ENCODE measurements at regions of chr11 and their contacts with region 1.

Region 1: GRCh38 chr11:56841210-56841810 is 92.8 kb upstream of the OR9G4 start:
- DNase-seq: peak; percentile 67
- H3K4me3 Mint-ChIP-seq: no peak overlapping the region
- H3K27ac Mint-ChIP-seq: peak overlapping the region; percentile 87
- H3K4me1 Mint-ChIP-seq: peaks cover 33% of the 10 kb centered on the region
- H3K27me3 Mint-ChIP-seq: no peaks in the 10 kb centered on the region
- CTCF ChIP-seq: peak; percentile 65

Region 2: GRCh38 chr11:56885177-56885576 is 43.9 kb after region 1 on chr11:
- CTCF ChIA-PET with region 1: interaction called, 5 read pairs
- intact Hi-C with region 1: loop called (anchors 1 kb)
- DNase-seq: peak; percentile 79
- H3K4me3 Mint-ChIP-seq: peak overlapping the region; percentile 53
- H3K27ac Mint-ChIP-seq: peak overlapping the region; percentile 98
- H3K4me1 Mint-ChIP-seq: peaks cover 48% of the 10 kb centered on the region
- H3K27me3 Mint-ChIP-seq: no peaks in the 10 kb centered on the region
- CTCF ChIP-seq: no peak

Region 3: DNA sequence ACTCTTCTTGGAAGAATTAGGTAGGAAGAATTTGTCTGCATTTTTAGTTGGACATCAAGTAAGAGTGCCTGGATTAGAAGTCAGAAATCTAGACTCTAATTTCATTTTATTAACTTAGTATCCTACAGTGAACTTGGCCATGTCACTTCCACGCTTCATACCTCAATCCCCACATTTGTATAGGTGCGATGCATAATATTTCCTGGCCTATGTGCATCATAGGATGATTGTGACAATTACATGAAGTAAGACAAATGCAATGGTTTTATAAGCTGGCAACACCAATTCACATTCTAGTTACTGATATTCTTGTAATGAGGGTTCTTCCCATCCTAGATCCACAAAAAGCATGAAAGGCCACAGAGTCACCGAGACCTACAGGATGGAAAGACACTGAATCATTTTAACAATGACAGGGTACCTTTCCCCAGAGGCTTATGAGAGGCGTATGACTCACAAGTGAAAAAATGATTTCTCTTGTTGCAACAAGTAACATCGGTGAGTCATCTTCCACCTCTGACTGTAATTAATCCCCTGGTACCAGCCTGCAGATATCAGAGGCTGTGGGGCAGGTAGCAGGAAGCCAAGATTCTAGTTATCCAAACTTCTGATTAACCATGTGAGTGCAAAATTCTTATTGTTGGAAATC is 91.4 kb after region 1 on chr11:
- CTCF ChIA-PET with region 1: no interaction called
- intact Hi-C with region 1: loop called (anchors 5 kb)
- DNase-seq: peak; percentile 60
- H3K4me3 Mint-ChIP-seq: peak overlapping the region; percentile 27
- H3K27ac Mint-ChIP-seq: peak overlapping the region; percentile 96
- H3K4me1 Mint-ChIP-seq: peaks cover 73% of the 10 kb centered on the region
- H3K27me3 Mint-ChIP-seq: no peaks in the 10 kb centered on the region
- CTCF ChIP-seq: no peak

Region 4: DNA sequence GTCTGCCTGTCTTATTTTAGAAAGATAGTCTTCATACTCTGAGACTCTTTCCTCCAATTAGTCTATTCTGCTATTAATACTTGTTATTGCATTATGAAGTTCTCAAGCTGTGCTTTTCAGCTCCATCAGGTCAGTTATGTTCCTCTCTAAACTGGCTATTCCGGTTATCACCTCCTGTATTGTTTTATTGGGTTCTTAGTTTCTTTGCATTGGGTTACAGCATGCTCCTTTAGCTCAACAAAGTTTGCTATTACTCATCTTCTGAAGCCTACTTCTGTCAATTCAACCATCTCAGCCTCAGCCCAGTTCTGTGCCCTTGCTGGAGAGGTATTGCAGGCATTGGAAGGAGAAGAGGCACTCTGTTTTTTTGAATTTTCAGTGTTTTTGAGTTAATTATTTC is 126.4 kb after region 1 on chr11:
- CTCF ChIA-PET with region 1: no interaction called
- intact Hi-C with region 1: no loop called
- DNase-seq: no peak
- H3K4me3 Mint-ChIP-seq: no peak overlapping the region
- H3K27ac Mint-ChIP-seq: no peak overlapping the region
- H3K4me1 Mint-ChIP-seq: peaks cover 13% of the 10 kb centered on the region
- H3K27me3 Mint-ChIP-seq: no peaks in the 10 kb centered on the region
- CTCF ChIP-seq: no peak

Region 5: DNA sequence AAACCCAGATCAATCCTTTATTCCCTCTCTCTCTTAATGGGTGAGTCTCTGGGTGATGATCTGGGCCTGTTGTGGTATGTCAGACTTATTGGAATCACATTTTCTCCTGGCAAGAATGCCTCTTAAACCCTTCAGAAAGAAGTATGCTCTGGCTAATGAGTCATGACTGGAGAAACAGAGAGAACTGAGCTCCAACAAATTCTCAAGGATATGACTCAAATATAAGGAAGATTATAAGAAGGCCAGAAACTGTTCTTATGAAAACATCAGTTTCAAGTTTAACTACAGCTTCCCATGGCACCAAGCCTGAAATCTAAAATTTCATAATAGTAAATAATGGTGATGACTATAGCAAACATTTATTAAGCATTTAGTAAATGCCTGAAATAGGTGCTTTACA is 231.3 kb after region 1 on chr11:
- CTCF ChIA-PET with region 1: interaction called, 4 read pairs
- intact Hi-C with region 1: loop called (anchors 5 kb)
- DNase-seq: peak; percentile 17
- H3K4me3 Mint-ChIP-seq: no peak overlapping the region
- H3K27ac Mint-ChIP-seq: peak overlapping the region; percentile 92
- H3K4me1 Mint-ChIP-seq: peaks cover 31% of the 10 kb centered on the region
- H3K27me3 Mint-ChIP-seq: no peaks in the 10 kb centered on the region
- CTCF ChIP-seq: no peak

Region 6: DNA sequence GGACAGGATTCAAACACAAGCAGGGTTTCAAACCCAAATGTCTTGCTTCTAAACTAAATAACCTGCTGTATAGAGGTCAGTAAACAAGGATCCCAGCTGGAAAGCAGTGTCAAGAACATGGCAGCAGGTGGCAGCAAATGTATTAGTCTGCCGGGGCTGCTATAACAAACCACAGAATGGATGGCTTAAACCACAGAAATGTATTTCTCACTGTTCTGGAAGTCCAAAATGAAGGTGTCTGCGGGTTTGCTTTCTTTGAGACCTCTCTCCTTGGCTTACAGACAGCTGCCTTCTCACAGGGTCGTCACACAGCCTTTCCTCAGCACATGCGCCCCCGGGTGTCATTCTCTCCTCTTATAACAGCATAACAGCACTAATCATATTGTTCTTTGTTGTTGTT is 275.3 kb after region 1 on chr11:
- CTCF ChIA-PET with region 1: no interaction called
- intact Hi-C with region 1: loop called (anchors 2 kb)
- DNase-seq: peak; percentile 33
- H3K4me3 Mint-ChIP-seq: no peak overlapping the region
- H3K27ac Mint-ChIP-seq: no peak overlapping the region
- H3K4me1 Mint-ChIP-seq: peaks cover 3% of the 10 kb centered on the region
- H3K27me3 Mint-ChIP-seq: no peaks in the 10 kb centered on the region
- CTCF ChIP-seq: peak; percentile 32

Measured in Calu3 (cell line).